ENCODE measurements at regions of chr6 and their contacts with region 1.

Region 1: DNA sequence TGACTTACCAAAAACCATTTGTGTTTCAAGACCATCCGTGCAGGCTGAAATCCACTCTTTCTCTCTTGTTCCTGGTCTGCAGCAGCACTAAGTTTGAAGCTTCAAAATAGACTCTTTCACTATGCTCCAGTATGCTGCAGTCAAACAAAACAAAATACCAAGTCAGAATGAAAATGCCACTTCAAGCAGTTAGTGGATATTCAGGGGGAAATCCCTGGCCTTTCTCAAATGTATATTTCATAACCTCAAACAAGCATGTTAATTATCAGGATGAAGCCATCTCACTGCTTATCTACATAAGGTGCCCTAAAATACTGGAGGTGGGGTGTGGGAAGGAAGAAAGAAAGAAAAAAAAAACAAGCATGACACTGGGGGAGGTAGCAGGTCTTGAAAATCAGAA is 103.5 kb downstream of the ATXN1 start:
- DNase-seq: no peak
- ATAC-seq: peak; percentile 76
- H3K4me3 ChIP-seq: peak overlapping the region; percentile 14; the same call in 1 of the 2 replicates
- H3K27ac ChIP-seq: peak overlapping the region; percentile 15; the same call in 1 of the 2 replicates
- H3K4me1 ChIP-seq: peaks cover 37% of the 10 kb centered on the region
- H3K27me3 ChIP-seq: no peaks in the 10 kb centered on the region
- CTCF ChIP-seq: no peak
- EP300 ChIP-seq: no peak; a peak in 1 of 4 replicates
- POLR2A ChIP-seq: no peak
- RAD21 ChIP-seq: no peak

Region 2: GRCh38 chr6:16670183-16670582 is 12.4 kb after region 1 on chr6:
- CTCF ChIA-PET with region 1: interaction called, 5 read pairs
- POLR2A ChIA-PET with region 1: interaction called, 12 read pairs
- RAD21 ChIA-PET with region 1: interaction called, 6 read pairs
- SMC1A ChIA-PET with region 1: interaction called, 16 read pairs
- in situ Hi-C with region 1: no loop called
- intact Hi-C with region 1: no loop called
- DNase-seq: no peak
- ATAC-seq: peak; percentile 83
- H3K4me3 ChIP-seq: no peak overlapping the region
- H3K27ac ChIP-seq: peak overlapping the region; percentile 38
- H3K4me1 ChIP-seq: peaks cover 31% of the 10 kb centered on the region
- H3K27me3 ChIP-seq: no peaks in the 10 kb centered on the region
- CTCF ChIP-seq: no peak
- EP300 ChIP-seq: no peak
- POLR2A ChIP-seq: no peak
- RAD21 ChIP-seq: no peak

Region 3: DNA sequence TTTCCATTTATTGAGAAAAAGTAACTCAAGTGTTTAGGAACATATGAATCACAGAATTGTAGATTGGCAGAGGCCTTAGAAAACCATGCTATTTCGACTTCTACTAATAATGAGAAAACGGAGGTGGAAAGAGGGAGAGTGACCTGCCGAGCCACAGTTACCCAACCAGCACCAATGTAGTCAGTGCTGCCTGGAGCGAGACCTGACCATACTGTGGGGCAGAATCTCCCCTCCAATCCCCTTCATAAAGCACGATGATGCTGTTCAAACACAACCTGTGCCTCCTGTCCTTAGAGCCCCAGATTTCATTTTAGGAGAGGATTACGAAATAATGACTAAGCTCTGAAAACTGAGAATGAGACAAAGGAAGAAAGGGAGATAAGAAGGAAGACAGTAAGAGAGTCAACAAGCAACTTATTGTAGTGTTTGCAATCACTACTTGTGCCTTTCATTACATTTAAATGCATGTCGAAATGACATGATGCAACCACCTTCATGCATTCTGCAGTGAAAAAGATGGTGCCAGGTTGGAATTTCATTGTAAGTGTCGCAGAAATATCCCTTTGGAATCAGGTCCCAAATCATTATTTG is 32.9 kb after region 1 on chr6:
- CTCF ChIA-PET with region 1: interaction called, 6 read pairs
- POLR2A ChIA-PET with region 1: interaction called, 6 read pairs
- RAD21 ChIA-PET with region 1: interaction called, 3 read pairs
- SMC1A ChIA-PET with region 1: interaction called, 13 read pairs
- in situ Hi-C with region 1: no loop called
- intact Hi-C with region 1: no loop called
- DNase-seq: no peak
- ATAC-seq: peak; percentile 92
- H3K4me3 ChIP-seq: peak overlapping the region; percentile 13; the same call in 1 of the 2 replicates
- H3K27ac ChIP-seq: peak overlapping the region; percentile 13; the same call in 1 of the 2 replicates
- H3K4me1 ChIP-seq: peaks cover 44% of the 10 kb centered on the region
- H3K27me3 ChIP-seq: no peaks in the 10 kb centered on the region
- CTCF ChIP-seq: no peak
- EP300 ChIP-seq: peak; percentile 73 to 82
- POLR2A ChIP-seq: peak; percentile 32; the same call in 1 of the 2 replicates
- RAD21 ChIP-seq: no peak

Region 4: GRCh38 chr6:16872543-16873235 is 214.9 kb after region 1 on chr6:
- CTCF ChIA-PET with region 1: no interaction called
- POLR2A ChIA-PET with region 1: no interaction called
- RAD21 ChIA-PET with region 1: no interaction called
- SMC1A ChIA-PET with region 1: no interaction called
- in situ Hi-C with region 1: no loop called
- intact Hi-C with region 1: no loop called
- DNase-seq: no peak
- ATAC-seq: peak; percentile 40; the same call in 1 of the 3 replicates
- H3K4me3 ChIP-seq: no peak overlapping the region
- H3K27ac ChIP-seq: no peak overlapping the region
- H3K4me1 ChIP-seq: no peaks in the 10 kb centered on the region
- H3K27me3 ChIP-seq: no peaks in the 10 kb centered on the region; a peak in 1 of 4 replicates
- CTCF ChIP-seq: peak; percentile 28 to 34 (median 31); a peak in 2 of 6 replicates
- EP300 ChIP-seq: no peak
- POLR2A ChIP-seq: no peak
- RAD21 ChIP-seq: peak; percentile 50